ENCODE measurements at regions of chr13 and their contacts with region 1.

Region 1: DNA sequence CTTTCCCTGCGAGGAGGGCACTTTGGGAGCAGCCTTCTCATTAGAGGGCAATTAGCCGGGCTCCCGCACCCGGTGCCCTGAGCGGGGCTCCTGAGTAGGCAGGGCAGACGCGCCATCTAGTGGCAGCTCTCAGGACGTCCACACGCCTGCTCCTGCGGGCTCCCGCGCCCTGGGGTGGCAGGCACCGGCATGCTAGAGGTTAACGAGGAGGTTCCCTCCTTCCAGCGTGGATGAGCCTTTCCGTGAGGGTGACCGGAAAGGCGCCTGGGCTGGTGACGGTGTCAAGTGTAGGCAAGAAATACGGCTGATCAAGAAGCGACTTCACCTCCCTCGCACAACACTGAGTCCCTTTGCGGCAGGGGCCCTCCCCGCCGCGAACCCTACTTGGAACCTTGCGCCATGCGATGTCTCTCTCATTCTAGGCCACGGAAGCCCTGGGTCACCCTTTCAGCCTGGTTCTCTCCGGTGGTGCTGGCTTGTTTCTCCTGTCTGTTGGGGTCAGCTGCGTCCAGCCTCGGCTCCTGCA is 67.7 kb downstream of the ALOX5AP start:
- DNase-seq: peak; percentile 85 to 87
- H3K4me3 ChIP-seq: peak overlapping the region in 2 of 3 donors; percentile 6 to 16
- H3K27ac ChIP-seq: peak overlapping the region in 1 of 3 donors; percentile 34
- H3K4me1 ChIP-seq: peaks cover 0 to 6% of the 10 kb centered on the region in 2 donors
- H3K27me3 ChIP-seq: no peaks in the 10 kb centered on the region
- CTCF ChIP-seq: peak; percentile 81 to 94 (median 86)
- POLR2A ChIP-seq: peak in 1 of 2 donors; percentile 29

Region 2: GRCh38 chr13:30673669-30674521 is 129.1 kb before region 1 on chr13:
- intact Hi-C with region 1: loop called (anchors 10 kb)
- DNase-seq: peak; percentile 95
- H3K4me3 ChIP-seq: peak overlapping the region; percentile 12 to 37 (median 30)
- H3K27ac ChIP-seq: peak overlapping the region; percentile 30 to 80 (median 78)
- H3K4me1 ChIP-seq: no peaks in the 10 kb centered on the region
- H3K27me3 ChIP-seq: no peaks in the 10 kb centered on the region
- CTCF ChIP-seq: peak; percentile 12 to 80 (median 73)
- POLR2A ChIP-seq: peak in 1 of 2 donors; percentile 40

Region 3: DNA sequence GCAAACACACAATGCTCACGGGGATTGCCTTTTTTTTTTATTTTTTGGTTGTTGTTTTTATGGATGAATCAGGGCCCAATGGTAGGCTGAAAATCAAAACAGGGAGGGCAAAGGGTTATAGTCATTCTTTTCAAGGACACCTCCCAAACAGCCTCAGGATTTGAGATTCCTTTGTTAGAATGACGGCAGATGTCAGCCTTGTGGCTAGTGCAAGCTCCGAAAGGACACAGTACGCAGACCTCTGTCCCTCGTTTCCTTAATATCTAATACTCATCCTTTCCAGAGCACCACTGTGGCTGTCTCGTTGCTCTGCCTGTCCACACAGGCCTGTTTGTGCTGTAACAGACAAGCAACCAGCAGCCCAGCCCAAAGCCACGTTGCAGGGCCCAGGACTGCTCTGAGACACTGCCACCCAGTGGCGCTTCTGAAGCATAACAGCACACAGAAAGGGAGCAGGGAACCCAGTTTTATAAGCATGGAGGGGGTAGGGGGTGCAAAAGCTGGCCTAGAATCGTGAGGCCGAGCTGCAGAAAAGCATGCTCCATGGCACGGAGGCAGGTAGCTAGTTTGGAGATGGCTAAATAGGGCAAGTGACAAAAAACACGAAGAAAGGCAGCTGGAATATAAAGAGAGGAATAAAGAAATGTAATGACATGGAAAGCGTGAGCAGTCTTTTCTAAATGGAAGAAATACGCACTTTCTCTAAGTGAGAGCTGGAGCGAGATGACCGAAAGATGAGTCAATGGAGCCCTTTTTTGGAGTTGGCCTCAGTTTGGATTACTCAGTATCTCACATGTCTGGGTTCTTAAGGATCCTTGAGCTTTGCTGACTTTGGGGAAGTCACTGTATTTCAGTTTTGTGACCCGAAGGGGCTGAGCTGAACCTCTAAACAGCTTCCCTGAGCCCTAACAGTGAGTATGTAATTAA is 62.4 kb after region 1 on chr13:
- intact Hi-C with region 1: loop called (anchors 10 kb)
- DNase-seq: peak; percentile 78 to 84
- H3K4me3 ChIP-seq: no peak overlapping the region
- H3K27ac ChIP-seq: peak overlapping the region; percentile 8 to 84 (median 82)
- H3K4me1 ChIP-seq: peaks cover 17 to 34% of the 10 kb centered on the region in 2 donors
- H3K27me3 ChIP-seq: no peaks in the 10 kb centered on the region
- CTCF ChIP-seq: peak; percentile 61 to 95 (median 92)
- POLR2A ChIP-seq: peak in 1 of 2 donors; percentile 28

Measured in thyroid gland (tissue), 4 donors.